ENCODE measurements at regions of chr13 and their contacts with region 1.

Region 1: DNA sequence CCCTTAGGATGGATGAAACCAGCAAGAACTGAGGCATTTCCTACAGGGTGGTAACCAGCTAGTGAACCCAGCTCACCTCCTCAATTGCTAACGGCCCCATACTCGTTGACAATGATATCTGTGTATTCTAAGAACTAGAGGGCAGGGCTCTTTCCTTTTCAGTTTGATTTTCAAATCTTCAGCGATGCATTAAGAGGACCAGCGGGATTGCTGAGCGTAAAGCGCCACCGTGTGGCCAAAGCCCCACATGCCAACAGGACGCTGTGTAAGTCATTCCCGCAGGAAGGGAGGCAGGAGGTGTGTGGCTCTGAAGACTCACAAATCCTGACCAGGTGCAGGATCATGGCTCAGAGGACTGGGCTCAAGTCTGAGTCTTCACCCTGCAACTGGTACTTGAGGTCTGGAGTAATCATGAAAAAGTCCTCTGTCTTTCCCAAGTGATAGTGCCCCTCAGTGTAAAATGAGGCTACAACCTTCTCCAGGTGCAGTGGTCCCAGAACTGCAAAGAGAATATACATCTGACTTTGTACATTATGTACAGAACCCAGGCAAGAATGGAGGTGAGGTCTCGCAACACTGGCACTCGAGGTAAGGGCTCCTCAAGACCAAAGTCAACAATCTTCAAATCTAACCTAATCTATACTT is 40.9 kb downstream of the C13orf42 start:
- DNase-seq: peak; percentile 48 to 76 (median 58)
- ATAC-seq: peak; percentile 96
- H3K4me3 ChIP-seq: no peak overlapping the region
- H3K27ac ChIP-seq: no peak overlapping the region
- H3K4me1 ChIP-seq: no peaks in the 10 kb centered on the region
- H3K27me3 ChIP-seq: peaks cover 0 to 22% of the 10 kb centered on the region in 2 experiments; a peak in 4 of 5 replicates
- CTCF ChIP-seq: peak; percentile 71 to 88 (median 85)
- EP300 ChIP-seq: no peak
- POLR2A ChIP-seq: no peak
- RAD21 ChIP-seq: peak; percentile 83 to 88

Region 2: DNA sequence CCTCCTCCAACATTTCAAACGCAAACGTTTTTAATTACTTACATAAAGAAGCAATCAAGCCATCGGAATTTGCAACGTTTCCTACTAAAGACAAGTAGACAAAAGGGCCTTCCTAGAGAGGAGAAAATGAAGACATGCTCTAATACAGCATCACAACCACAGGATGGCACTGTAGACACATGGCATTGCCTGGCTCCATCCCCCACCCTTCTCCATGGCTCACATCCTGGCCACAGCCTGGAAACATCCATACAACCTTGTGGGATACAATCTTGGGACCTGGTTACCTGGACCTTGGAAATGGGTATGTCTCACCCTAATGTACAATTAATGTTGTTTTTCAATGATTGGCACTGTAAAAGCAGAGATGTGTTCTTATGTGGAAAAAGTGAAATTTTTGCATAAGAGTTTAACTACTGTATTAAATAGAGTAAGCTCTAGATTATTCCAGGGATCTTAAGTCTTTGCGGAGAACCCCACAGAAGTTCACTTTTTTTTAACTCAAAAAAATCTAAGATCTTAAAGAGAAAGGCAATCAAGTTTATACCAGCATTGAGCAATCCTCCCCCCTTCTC is 1400.3 kb before region 1 on chr13:
- CTCF ChIA-PET with region 1: interaction called, 3 read pairs
- POLR2A ChIA-PET with region 1: no interaction called
- in situ Hi-C with region 1: loop called (anchors 25 kb)
- intact Hi-C with region 1: no loop called
- DNase-seq: peak; percentile 40 to 57 (median 49)
- ATAC-seq: peak; percentile 94
- H3K4me3 ChIP-seq: no peak overlapping the region
- H3K27ac ChIP-seq: no peak overlapping the region
- H3K4me1 ChIP-seq: no peaks in the 10 kb centered on the region
- H3K27me3 ChIP-seq: no peaks in the 10 kb centered on the region
- CTCF ChIP-seq: peak; percentile 56 to 69 (median 57); a peak in 5 of 6 replicates
- EP300 ChIP-seq: no peak
- POLR2A ChIP-seq: no peak
- RAD21 ChIP-seq: peak; percentile 76 to 80

Region 3: DNA sequence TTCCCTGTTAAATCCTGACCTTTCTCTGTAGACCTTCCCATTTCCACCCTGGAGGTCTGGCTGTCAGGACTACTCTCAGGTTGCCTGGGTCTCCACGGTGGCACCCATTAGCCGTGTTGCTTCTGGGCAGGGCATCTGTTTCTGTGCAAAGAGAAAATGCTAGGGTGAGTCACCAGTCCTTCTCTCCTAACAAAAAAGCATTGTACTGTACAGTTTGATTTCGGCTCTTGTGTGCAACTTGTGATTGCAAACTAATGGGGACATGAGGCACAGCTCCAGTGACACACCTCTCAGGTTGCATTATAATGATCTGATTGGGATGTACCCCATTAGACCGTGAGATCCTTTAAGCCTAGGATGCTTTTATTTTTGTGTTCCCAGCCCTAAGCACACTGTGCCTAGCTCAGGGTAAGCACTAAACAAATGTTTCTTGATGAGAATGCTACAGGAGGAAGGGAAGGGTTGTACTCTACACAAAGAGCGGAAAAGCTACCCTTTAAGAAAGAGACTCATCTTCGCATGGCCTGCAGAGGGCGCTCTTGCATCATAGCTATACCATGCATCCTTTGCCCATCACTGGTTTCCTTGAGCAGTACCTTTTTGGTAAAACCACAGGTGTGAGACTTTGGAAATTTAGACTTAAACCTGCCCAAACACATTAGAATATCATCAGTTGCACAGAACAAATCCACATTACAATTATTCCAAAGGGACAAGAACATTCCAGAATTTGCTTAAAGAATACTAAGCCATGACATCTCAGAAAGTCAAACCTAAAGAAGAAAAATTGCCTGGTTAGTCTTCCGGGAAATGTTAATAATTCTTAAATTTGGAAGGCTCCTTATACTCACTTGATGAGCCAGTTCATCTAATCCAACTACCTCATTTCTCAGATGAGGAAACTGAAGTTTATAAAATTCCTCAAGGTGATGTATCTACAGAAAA is 1093.5 kb before region 1 on chr13:
- CTCF ChIA-PET with region 1: no interaction called
- POLR2A ChIA-PET with region 1: no interaction called
- in situ Hi-C with region 1: loop called (anchors 10 kb)
- intact Hi-C with region 1: loop called (anchors 1 kb)
- DNase-seq: peak; percentile 59 to 77 (median 62)
- ATAC-seq: peak; percentile 90
- H3K4me3 ChIP-seq: no peak overlapping the region
- H3K27ac ChIP-seq: no peak overlapping the region
- H3K4me1 ChIP-seq: no peaks in the 10 kb centered on the region; a peak in 3 of 5 replicates
- H3K27me3 ChIP-seq: no peaks in the 10 kb centered on the region
- CTCF ChIP-seq: peak; percentile 67 to 82 (median 80)
- EP300 ChIP-seq: no peak
- POLR2A ChIP-seq: no peak
- RAD21 ChIP-seq: peak; percentile 76 to 90

Region 4: GRCh38 chr13:51213173-51213728 is 143.1 kb after region 1 on chr13:
- CTCF ChIA-PET with region 1: no interaction called
- POLR2A ChIA-PET with region 1: no interaction called
- in situ Hi-C with region 1: no loop called
- intact Hi-C with region 1: no loop called
- DNase-seq: no peak
- ATAC-seq: no peak
- H3K4me3 ChIP-seq: no peak overlapping the region
- H3K27ac ChIP-seq: no peak overlapping the region
- H3K4me1 ChIP-seq: no peaks in the 10 kb centered on the region
- H3K27me3 ChIP-seq: peaks cover 0 to 9% of the 10 kb centered on the region in 2 experiments; a peak in 3 of 5 replicates
- CTCF ChIP-seq: no peak
- EP300 ChIP-seq: no peak
- POLR2A ChIP-seq: no peak
- RAD21 ChIP-seq: no peak